ENCODE measurements at regions of chr6 and their contacts with region 1.

Region 1: GRCh38 chr6:42043787-42044475 is 6.4 kb upstream of the TAF8 start:
- DNase-seq: peak; percentile 97
- ATAC-seq: peak; percentile 42
- H3K4me3 Mint-ChIP-seq: peak overlapping the region; percentile 88
- H3K27ac Mint-ChIP-seq: peak overlapping the region; percentile 100
- H3K4me1 Mint-ChIP-seq: peaks cover 84% of the 10 kb centered on the region
- H3K27me3 Mint-ChIP-seq: no peaks in the 10 kb centered on the region

Region 2: GRCh38 chr6:41545703-41546474 is 498.0 kb before region 1 on chr6 and contains the start of gene FOXP4:
- CTCF ChIA-PET with region 1: no interaction called
- POLR2A ChIA-PET with region 1: no interaction called
- intact Hi-C with region 1: loop called in 1 of 2 experiments (anchors 5 kb)
- DNase-seq: peak; percentile 92
- ATAC-seq: peak; percentile 84
- H3K4me3 Mint-ChIP-seq: peak within 1 kb of the TSS; percentile 84
- H3K27ac Mint-ChIP-seq: peak within 1 kb of the TSS; percentile 92
- H3K4me1 Mint-ChIP-seq: peaks cover 15% of the 10 kb centered on the region
- H3K27me3 Mint-ChIP-seq: peaks cover 6% of the 10 kb centered on the region
- total RNA-seq, gene FOXP4: 11.1 to 13.8 TPM

Region 3: DNA sequence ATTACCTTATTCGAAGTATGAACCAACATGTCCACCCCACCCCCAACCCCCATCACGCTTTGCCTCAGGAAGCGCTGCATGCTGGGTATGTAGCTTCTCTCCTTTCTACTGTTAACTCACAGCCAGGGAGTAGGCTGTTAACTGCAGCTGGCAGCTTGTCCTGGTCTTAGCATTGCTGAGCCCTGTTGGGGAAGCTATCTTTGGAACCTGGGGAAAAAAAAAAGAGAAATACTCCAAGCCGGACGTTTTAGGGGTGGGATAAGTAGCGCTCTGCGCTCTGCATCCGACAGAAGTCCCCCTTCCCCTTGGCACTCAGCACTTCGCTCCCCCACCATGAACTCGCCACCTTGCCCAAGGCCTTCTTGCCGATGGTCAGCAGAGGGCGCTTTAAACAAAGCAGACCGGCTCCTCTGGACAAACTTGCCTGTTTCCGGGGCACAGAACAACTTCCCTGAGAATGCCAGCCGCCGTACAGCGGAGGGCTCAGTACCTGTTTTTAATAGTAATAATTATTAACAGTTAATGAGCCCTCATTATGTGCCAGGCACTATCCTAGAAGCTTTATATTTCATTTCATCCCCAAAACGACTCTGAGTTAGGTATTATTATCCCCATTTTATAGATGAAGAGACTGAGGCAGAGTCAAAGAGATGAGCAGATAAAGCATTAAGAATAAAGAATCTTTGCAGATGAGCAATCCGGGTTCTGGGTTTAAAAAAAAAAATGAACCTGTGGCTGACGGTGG is 440.9 kb before region 1 on chr6:
- CTCF ChIA-PET with region 1: no interaction called
- POLR2A ChIA-PET with region 1: no interaction called
- intact Hi-C with region 1: no loop called
- DNase-seq: peak; percentile 86
- ATAC-seq: peak; percentile 93
- H3K4me3 Mint-ChIP-seq: no peak overlapping the region
- H3K27ac Mint-ChIP-seq: no peak overlapping the region
- H3K4me1 Mint-ChIP-seq: peaks cover 3% of the 10 kb centered on the region
- H3K27me3 Mint-ChIP-seq: no peaks in the 10 kb centered on the region

Region 4: GRCh38 chr6:41787219-41787917 is 256.6 kb before region 1 on chr6 and contains the start of gene TOMM6:
- CTCF ChIA-PET with region 1: interaction called, 63 read pairs
- POLR2A ChIA-PET with region 1: no interaction called
- intact Hi-C with region 1: loop called (anchors 1 kb)
- DNase-seq: peak; percentile 98
- ATAC-seq: peak; percentile 86
- H3K4me3 Mint-ChIP-seq: peak within 1 kb of the TSS; percentile 96
- H3K27ac Mint-ChIP-seq: peak within 1 kb of the TSS; percentile 98
- H3K4me1 Mint-ChIP-seq: peaks cover 19% of the 10 kb centered on the region
- H3K27me3 Mint-ChIP-seq: peaks cover 2% of the 10 kb centered on the region
- total RNA-seq, gene TOMM6: 282 to 345 TPM

Region 5: DNA sequence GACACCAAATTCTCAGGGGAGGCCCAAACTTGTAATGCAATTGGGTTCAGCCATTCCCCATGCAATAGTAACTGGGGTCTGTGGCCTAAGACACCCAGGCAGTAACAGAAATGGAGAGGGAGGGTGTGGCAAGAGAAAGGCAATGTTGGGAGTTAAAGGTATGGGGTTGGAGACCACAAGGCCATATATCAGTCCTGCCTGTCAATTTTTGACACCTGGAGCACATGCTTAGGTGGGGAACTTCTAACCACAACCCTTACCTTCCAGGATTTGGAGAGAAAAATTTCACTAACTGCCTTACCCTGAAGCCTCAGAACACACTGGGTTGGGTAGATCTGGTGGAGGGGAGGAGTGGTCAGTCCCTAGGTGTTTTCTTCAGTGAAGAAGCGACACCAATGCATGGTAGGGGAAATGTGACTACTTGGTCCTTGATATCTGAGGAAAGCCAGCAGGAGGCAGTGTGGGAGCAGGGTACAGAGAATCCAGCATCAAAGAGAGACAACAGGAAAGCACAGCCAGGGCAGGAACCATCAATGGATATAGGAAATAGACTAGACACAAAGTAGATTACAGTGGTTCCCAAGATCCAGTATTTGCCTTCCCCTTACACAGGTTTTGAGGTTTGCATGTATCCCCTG is 141.9 kb before region 1 on chr6:
- CTCF ChIA-PET with region 1: interaction called, 60 read pairs
- POLR2A ChIA-PET with region 1: no interaction called
- intact Hi-C with region 1: loop called (anchors 1 kb)
- DNase-seq: peak; percentile 75
- ATAC-seq: peak; percentile 78
- H3K4me3 Mint-ChIP-seq: no peak overlapping the region
- H3K27ac Mint-ChIP-seq: no peak overlapping the region
- H3K4me1 Mint-ChIP-seq: peaks cover 6% of the 10 kb centered on the region
- H3K27me3 Mint-ChIP-seq: no peaks in the 10 kb centered on the region

Region 6: DNA sequence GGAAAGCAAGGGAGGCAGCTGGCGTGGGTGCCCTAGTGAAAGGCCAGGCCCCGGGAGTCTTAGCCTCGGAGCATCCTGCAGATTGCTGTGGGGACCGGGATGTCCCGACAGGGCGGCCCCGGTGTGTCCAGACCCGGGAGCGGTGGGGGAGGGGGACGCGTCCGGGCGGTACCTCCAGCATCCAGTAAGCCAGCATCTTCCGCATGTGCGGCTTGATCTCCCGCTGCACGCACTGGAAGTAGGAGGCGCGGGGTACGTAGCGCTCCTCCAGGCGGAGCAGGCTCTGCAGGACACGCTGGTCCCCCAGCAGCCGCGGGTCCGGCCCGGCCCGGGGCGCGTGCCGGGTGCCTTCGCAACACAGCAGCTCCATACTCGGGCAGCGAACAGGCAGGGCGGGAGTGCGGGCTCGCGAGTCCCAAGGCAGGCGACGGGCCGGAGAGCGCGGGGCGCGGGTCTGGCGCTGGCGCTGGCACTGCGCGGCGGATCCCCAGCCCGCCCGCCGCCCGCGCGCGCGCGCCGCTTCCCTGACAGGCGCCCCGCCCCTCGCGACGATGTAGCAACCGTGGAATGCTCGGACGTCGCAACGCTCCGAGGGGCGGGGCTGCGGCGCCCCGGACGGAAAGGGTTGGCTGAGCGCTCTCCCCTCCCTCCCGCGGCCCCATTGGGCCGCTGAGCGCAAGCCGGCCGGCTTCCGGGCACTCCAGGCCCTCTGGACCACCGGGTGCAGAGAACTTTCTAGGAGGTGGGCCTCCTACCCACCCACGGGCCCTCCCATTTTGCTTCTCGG is 102.5 kb before region 1 on chr6 and contains the start of gene CCND3:
- CTCF ChIA-PET with region 1: interaction called, 355 read pairs
- POLR2A ChIA-PET with region 1: interaction called, 28 read pairs
- intact Hi-C with region 1: loop called (anchors 1 kb)
- DNase-seq: peak; percentile 96
- ATAC-seq: peak; percentile 79
- H3K4me3 Mint-ChIP-seq: peak within 1 kb of the TSS; percentile 100
- H3K27ac Mint-ChIP-seq: peak within 1 kb of the TSS; percentile 96
- H3K4me1 Mint-ChIP-seq: peaks cover 63% of the 10 kb centered on the region
- H3K27me3 Mint-ChIP-seq: no peaks in the 10 kb centered on the region
- total RNA-seq, gene CCND3: 625 to 806 TPM

Region 7: GRCh38 chr6:42017021-42017643 is 26.8 kb before region 1 on chr6:
- CTCF ChIA-PET with region 1: interaction called, 11 read pairs
- POLR2A ChIA-PET with region 1: interaction called, 3 read pairs
- intact Hi-C with region 1: loop called (anchors 1 kb)
- DNase-seq: peak; percentile 72
- ATAC-seq: peak; percentile 68
- H3K4me3 Mint-ChIP-seq: peak overlapping the region; percentile 49
- H3K27ac Mint-ChIP-seq: peak overlapping the region; percentile 96
- H3K4me1 Mint-ChIP-seq: peaks cover 72% of the 10 kb centered on the region
- H3K27me3 Mint-ChIP-seq: no peaks in the 10 kb centered on the region

Measured in activated CD4-positive, alpha-beta T cell treated with anti-CD3 and anti-CD28 coated beads for 36 hours (primary cell).